ENCODE measurements at regions of chr17 and their contacts with region 1.

Region 1: GRCh38 chr17:4004517-4005295 is 40.5 kb upstream of the ATP2A3 start:
- DNase-seq: peak; percentile 43
- H3K4me3 Mint-ChIP-seq: no peak overlapping the region
- H3K27ac Mint-ChIP-seq: no peak overlapping the region
- H3K4me1 Mint-ChIP-seq: peaks cover 1% of the 10 kb centered on the region
- H3K27me3 Mint-ChIP-seq: peaks cover 3% of the 10 kb centered on the region

Region 2: GRCh38 chr17:3697103-3697476 is 307.6 kb before region 1 on chr17:
- intact Hi-C with region 1: no loop called
- DNase-seq: no peak
- H3K4me3 Mint-ChIP-seq: peak overlapping the region; percentile 13
- H3K27ac Mint-ChIP-seq: no peak overlapping the region
- H3K4me1 Mint-ChIP-seq: peaks cover 18% of the 10 kb centered on the region
- H3K27me3 Mint-ChIP-seq: no peaks in the 10 kb centered on the region

Region 3: GRCh38 chr17:3861761-3862681 is 142.7 kb before region 1 on chr17:
- intact Hi-C with region 1: loop called (anchors 2 kb)
- DNase-seq: no peak
- H3K4me3 Mint-ChIP-seq: no peak overlapping the region
- H3K27ac Mint-ChIP-seq: no peak overlapping the region
- H3K4me1 Mint-ChIP-seq: no peaks in the 10 kb centered on the region
- H3K27me3 Mint-ChIP-seq: no peaks in the 10 kb centered on the region

Region 4: DNA sequence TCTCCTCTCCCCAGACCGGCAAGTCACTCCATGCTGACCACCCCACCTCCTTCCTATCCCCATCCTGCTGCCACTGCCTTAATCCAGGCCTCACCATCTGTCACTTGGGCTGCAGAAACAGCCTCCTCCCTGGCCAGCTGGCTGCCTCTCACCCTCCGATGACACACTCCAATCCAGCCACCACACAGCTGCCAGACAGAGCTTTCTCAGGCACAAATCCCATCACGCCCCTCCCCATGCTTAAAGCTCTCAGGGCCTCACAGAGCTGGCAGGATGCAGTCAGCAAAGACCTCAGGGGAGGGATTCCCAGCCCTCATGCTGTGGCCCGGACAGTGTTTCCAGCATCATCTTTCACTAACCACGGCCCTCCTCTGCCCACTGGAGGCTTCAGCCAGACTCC is 125.5 kb before region 1 on chr17:
- intact Hi-C with region 1: no loop called
- DNase-seq: no peak
- H3K4me3 Mint-ChIP-seq: no peak overlapping the region
- H3K27ac Mint-ChIP-seq: no peak overlapping the region
- H3K4me1 Mint-ChIP-seq: no peaks in the 10 kb centered on the region
- H3K27me3 Mint-ChIP-seq: no peaks in the 10 kb centered on the region

Region 5: GRCh38 chr17:3965118-3965803 is 39.4 kb before region 1 on chr17:
- intact Hi-C with region 1: loop called (anchors 2 kb)
- DNase-seq: peak; percentile 73
- H3K4me3 Mint-ChIP-seq: peak overlapping the region; percentile 85
- H3K27ac Mint-ChIP-seq: peak overlapping the region; percentile 86
- H3K4me1 Mint-ChIP-seq: peaks cover 45% of the 10 kb centered on the region
- H3K27me3 Mint-ChIP-seq: no peaks in the 10 kb centered on the region

Measured in activated T-helper 2 cell treated with anti-CD3 and anti-CD28 coated beads, Interferon-gamma antibody, Interleukin-2, Interleukin-4, amounts not matched to agents 10 μg/mL and 5 μg/mL and 100 μg/mL, durations not matched to agents 14 hours and 24 hours and 36 hours (primary cell).